Aorta (tissue), 5 donors: ENCODE measurements at regions of chr5 and their contacts with region 1.

Region 1: GRCh38 chr5:73902327-73903051 is 276.5 kb downstream of the ARHGEF28 start:
- DNase-seq: no peak
- ATAC-seq: peak; percentile 81
- H3K4me3 ChIP-seq: no peak overlapping the region
- H3K27ac ChIP-seq: no peak overlapping the region
- H3K4me1 ChIP-seq: no peaks in the 10 kb centered on the region
- H3K27me3 ChIP-seq: no peaks in the 10 kb centered on the region

Region 2: DNA sequence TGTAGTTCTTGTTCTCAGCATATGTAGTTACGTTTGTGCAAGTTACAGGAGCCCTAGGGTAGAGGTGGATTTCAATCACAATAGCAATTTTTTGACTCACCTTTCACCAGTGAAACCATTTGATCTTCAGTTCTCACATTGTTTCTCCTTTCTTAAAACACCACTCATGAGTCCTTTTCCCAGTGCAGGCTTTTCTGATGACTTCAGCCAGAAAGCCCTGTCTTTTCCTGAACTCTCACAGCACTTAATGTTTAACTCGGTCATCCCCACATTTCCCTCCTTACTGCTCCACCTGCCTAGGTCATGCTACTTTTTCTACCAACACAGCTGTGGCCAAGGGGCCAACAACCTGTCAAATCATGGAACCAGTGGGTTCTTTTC is 238.6 kb before region 1 on chr5:
- intact Hi-C with region 1: no loop called
- DNase-seq: no peak
- ATAC-seq: no peak
- H3K4me3 ChIP-seq: no peak overlapping the region
- H3K27ac ChIP-seq: no peak overlapping the region
- H3K4me1 ChIP-seq: peaks cover 5 to 9% of the 10 kb centered on the region in 2 donors
- H3K27me3 ChIP-seq: no peaks in the 10 kb centered on the region

Region 3: DNA sequence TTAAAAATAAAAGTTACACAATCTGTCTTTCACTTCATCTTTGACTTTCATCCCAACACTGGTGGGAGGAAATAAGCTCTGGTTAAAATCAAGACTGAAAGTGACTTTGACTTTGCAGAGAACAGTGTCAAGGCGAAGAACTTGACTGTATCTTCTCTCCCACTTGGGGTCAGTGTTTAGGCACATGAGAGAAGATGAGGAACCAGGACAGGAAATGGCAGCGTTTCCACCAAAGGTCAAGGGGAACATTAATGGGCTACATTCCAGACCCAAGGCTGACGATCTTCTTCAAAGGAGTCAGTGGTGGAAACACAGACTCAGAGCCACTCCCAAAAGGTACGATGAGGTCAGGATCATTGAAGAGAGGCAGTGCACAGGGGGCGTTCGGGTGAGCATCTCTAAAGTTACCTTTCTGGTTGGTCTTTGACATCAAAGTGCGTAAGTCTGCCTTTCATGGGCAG is 133.1 kb after region 1 on chr5:
- intact Hi-C with region 1: loop called (anchors 10 kb)
- DNase-seq: no peak
- ATAC-seq: peak; percentile 66
- H3K4me3 ChIP-seq: no peak overlapping the region
- H3K27ac ChIP-seq: no peak overlapping the region
- H3K4me1 ChIP-seq: no peaks in the 10 kb centered on the region
- H3K27me3 ChIP-seq: no peaks in the 10 kb centered on the region

Region 4: DNA sequence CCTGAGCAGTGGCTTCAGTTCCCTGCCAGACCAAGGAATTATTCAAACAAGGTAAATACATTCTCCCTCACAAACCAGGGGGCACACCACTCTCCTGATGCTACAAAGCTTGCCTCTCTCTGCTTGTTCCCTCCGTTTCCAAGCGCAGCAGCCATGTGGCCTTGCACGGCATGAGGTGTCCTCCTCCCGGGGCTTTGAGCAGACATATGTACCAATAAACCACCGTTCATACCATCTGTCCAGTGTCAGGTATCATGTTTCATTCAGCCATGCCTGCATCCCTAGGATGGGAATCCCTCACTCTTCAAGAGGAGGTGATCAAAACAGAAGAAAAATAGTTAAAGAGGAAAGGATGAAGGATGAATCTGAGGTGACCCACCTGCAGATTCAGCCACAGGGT is 455.3 kb after region 1 on chr5:
- intact Hi-C with region 1: no loop called
- DNase-seq: no peak
- ATAC-seq: no peak
- H3K4me3 ChIP-seq: no peak overlapping the region
- H3K27ac ChIP-seq: no peak overlapping the region
- H3K4me1 ChIP-seq: no peaks in the 10 kb centered on the region
- H3K27me3 ChIP-seq: no peaks in the 10 kb centered on the region